AG04450 (cell line): ENCODE measurements at regions of chr7 and their contacts with region 1.

Region 1: GRCh38 chr7:135170274-135170997 is at the start of gene CYREN:
- DNase-seq: peak; percentile 74
- H3K4me3 ChIP-seq: peak within 1 kb of the TSS; percentile 78
- H3K27ac ChIP-seq: peak within 1 kb of the TSS; percentile 97
- H3K27me3 ChIP-seq: no peaks in the 10 kb centered on the region
- CTCF ChIP-seq: peak; percentile 65
- polyA plus RNA-seq, gene CYREN: 28.4 and 30.6 TPM in 2 replicates

Region 2: DNA sequence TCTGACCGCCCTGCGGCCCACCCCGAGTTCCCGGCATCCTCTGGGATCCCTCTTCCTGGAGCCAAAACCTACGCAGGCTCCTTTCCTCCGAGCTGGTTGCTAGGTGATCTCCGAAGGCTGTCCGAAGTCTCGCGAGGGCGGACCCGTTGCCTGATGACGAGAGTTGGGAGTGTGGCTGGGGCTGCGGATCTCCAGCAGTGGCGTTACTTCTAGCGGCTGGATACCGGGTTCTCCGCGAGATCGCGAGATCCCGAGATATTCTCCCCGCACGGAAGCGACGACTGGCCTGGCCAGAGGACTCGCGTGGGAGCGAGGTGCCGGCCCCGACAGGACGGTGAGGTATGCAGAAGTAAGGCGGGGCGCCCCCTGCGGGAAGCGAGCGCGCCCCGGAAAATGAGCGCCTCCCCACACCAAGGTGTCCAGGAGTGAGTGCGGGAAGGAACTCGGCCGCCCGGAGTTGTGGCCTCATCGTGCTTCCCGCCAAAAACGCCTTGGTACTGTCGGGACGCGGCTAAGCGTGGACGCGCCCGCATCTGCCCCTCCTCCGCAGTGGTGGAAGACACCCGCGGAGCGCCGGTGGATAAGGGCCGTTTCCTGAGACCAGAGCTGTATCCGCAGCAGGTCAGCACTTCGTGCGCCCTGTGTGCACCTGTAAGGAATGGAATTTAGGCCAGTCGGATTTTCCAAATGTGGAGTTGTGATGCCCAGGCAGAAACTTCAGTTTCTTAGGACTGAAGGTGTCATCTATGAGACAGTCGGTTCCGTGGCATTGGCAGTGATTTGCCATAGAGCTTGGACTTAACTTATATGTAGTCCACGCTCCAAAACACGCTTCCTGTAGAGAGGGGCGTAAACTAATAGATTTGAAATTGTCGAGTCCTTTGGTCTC is 183.8 kb before region 1 on chr7 and contains the start of gene AGBL3:
- CTCF ChIA-PET with region 1: interaction called, 15 read pairs
- POLR2A ChIA-PET with region 1: interaction called, 4 read pairs
- DNase-seq: peak; percentile 89
- H3K4me3 ChIP-seq: peak within 1 kb of the TSS; percentile 87
- H3K27ac ChIP-seq: peak within 1 kb of the TSS; percentile 73
- H3K27me3 ChIP-seq: no peaks in the 10 kb centered on the region
- CTCF ChIP-seq: peak; percentile 65
- polyA plus RNA-seq, gene AGBL3: 0.32 and 0.38 TPM in 2 replicates

Region 3: GRCh38 chr7:135147899-135148721 is 22.3 kb before region 1 on chr7 and contains the start of gene TMEM140:
- CTCF ChIA-PET with region 1: interaction called, 12 read pairs
- POLR2A ChIA-PET with region 1: interaction called, 6 read pairs
- DNase-seq: no peak
- H3K4me3 ChIP-seq: peak within 1 kb of the TSS; percentile 48
- H3K27ac ChIP-seq: peak within 1 kb of the TSS; percentile 68
- H3K27me3 ChIP-seq: no peaks in the 10 kb centered on the region
- CTCF ChIP-seq: no peak
- polyA plus RNA-seq, gene TMEM140: 1.0 and 1.4 TPM in 2 replicates

Region 4: DNA sequence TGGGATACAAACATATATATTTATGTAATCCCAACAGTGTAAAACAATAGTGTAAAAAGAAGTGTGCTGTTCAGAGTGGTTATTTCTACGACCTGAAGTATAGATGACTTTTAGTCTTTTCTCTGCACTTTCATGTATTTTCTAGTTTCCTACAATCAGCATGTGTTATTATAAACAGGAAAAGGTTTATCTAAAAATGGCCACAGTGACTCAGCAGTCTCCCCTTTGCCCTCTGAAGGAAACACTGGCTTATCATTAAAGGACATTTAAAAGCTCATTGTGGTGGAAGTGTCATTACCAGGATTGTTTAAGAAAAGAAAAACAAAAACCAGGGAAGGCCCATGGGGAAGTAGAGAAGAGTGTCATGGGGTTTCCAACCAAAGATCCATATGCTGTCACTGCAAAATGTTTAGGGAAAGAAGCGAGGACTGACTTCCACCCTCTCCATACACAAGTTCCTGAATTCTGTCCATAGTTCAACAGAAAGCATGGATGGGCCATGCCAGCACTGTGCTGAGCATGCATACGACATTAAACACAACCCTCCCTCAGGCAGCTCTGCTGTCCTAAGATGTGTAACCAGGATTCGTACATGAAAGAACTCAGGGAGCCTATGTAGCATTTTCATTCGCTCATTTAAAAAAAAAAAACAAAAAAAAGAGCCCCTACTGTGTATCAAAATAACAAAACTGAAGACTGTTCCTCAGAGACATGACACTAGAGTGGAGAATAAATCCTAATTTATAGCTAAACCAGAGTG is 10.2 kb before region 1 on chr7:
- CTCF ChIA-PET with region 1: interaction called, 9 read pairs
- POLR2A ChIA-PET with region 1: interaction called, 12 read pairs
- DNase-seq: no peak
- H3K4me3 ChIP-seq: no peak overlapping the region
- H3K27ac ChIP-seq: peak overlapping the region; percentile 69
- H3K27me3 ChIP-seq: peaks cover 2% of the 10 kb centered on the region
- CTCF ChIP-seq: no peak